GM10248 (cell line): ENCODE measurements at regions of chr3 and their contacts with region 1.

Region 1: GRCh38 chr3:123028233-123028828 is 768 bp upstream of the SEMA5B start:
- DNase-seq: peak; percentile 67
- CTCF ChIP-seq: peak; percentile 40

Region 2: DNA sequence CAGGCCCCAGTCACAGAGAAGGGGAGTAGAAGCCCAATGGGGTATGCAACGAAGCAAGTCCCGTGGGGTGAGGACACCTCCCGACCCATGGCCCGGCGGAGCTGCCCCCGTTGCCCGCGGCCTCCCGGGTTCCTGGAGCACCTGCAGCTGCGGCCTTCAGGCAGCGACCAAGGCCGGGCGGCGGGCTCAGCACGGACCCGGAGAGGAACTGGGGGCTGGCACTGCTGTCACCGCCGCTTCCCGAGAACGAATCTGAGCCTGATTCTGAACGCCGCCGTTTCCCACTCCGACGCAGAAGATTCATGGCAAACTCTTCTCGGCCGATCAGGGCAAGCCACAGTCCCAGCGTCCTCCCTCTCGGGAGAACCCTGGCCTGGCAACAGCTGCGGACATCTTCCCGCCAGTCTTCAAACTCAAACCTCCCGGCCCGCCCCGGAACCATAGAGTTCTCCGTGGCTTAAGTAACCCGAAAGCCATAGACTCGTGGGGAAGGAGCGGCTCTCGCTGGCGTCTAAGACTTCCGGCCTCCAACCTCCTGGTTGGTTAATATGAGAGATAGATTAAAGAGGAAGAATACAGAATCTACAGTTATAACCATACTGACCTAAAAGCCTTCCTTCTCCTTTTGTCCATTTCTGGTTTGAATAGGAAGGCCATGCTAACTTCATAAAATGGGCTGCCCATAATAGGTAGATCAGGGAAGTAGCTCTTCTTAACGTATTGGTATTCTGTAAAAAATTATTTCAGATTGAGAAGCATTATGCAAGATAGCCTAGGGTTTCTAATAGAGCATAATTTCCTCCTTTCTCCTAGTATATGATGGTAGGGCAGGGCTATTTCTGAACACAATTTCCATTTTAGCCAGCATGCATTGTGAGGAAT is 1482.5 kb before region 1 on chr3 and contains the start of gene POLQ:
- CTCF ChIA-PET with region 1: interaction called, 16 read pairs
- POLR2A ChIA-PET with region 1: no interaction called
- DNase-seq: peak; percentile 91
- CTCF ChIP-seq: no peak

Region 3: DNA sequence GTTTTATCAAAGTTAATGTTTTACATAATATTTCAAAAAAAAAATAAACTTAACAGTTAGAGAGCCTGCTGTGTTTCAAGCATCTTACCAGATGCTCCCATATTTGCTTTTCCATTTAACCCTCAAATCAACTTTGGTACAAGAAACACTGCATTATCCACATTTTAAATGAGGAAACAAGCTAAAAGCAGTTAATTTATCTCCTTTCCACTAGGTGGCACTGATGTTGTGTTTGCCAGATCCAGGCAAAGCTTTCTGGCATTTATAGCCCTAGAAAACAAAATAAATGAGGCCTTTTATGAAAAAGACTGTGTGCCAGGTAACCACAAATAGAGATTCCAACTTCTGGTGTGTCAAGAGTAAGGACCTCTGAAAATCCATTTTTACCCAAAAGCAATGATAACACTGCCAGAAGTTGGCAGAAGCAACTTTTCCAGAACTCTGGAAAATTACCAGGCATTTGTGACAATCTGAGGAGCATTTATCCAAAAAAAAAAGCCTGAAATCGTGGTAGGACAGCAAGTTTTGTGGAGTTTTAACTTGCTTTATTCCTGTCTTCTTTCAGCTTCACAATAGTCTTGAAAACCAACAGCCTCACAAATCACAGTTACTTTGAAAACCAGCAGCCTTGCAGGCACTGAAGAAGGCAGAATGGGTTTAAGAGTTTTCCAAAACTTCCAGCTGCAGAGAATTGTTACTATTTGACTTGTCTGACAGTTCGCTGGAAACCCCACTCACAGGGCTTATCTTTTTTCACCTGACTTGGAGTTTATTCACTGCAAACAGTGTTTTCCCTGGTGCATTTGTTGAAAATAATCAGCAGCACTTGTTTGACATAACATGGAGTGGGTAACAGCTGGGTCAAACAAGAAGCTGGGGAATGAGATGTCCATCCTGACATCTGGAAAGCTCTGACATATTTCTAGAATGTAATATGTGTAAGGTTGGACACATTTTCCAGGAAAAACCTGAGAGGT is 635.2 kb before region 1 on chr3:
- CTCF ChIA-PET with region 1: interaction called, 11 read pairs
- POLR2A ChIA-PET with region 1: no interaction called
- DNase-seq: peak; percentile 41
- CTCF ChIP-seq: peak; percentile 58

Region 4: GRCh38 chr3:122942937-122943827 is 85.1 kb before region 1 on chr3:
- CTCF ChIA-PET with region 1: interaction called, 17 read pairs
- POLR2A ChIA-PET with region 1: no interaction called
- DNase-seq: peak; percentile 75
- CTCF ChIP-seq: peak; percentile 78

Region 5: GRCh38 chr3:122961146-122961545 is 67.2 kb before region 1 on chr3:
- CTCF ChIA-PET with region 1: no interaction called
- POLR2A ChIA-PET with region 1: no interaction called
- DNase-seq: no peak
- CTCF ChIP-seq: no peak

Region 6: GRCh38 chr3:123015557-123015956 is 12.8 kb before region 1 on chr3:
- CTCF ChIA-PET with region 1: interaction called, 27 read pairs
- POLR2A ChIA-PET with region 1: no interaction called
- DNase-seq: no peak
- CTCF ChIP-seq: no peak

Region 7: GRCh38 chr3:123298903-123299302 is 270.6 kb after region 1 on chr3:
- CTCF ChIA-PET with region 1: no interaction called
- POLR2A ChIA-PET with region 1: no interaction called
- DNase-seq: no peak
- CTCF ChIP-seq: no peak